K562 (cell line): ENCODE measurements at regions of chr3 and their contacts with region 1.

Region 1: DNA sequence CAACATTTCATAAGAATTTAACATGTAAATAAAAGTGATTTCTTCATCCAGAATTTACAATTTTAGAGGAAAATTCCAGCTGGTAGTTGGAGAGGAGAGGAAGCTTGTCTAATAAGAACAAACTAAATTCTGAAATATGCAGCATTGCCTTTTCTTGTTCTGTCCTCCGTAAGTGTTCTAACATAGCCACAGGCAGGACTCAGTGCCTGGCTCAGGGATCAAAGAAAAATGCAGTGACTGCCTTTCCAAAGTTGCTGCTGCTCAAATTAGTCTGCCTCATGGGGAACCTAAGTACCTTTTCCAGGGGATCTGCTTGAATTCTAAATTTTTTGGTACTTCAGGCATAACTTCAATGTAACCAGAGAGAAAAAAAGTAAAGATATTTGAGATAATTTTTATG is 713.0 kb upstream of the CADM2 start:
- DNase-seq: peak in 2 of 4 experiments; percentile 10 to 58
- ATAC-seq: peak; percentile 57
- H3K4me3 ChIP-seq: peak overlapping the region; percentile 33
- H3K27ac ChIP-seq: peak overlapping the region; percentile 87
- H3K4me1 ChIP-seq: no peaks in the 10 kb centered on the region; a peak in 1 of 5 replicates
- H3K27me3 ChIP-seq: no peaks in the 10 kb centered on the region
- CTCF ChIP-seq: no peak
- EP300 ChIP-seq: no peak
- POLR2A ChIP-seq: no peak
- RAD21 ChIP-seq: no peak

Region 2: GRCh38 chr3:84077479-84077878 is 168.3 kb before region 1 on chr3:
- CTCF ChIA-PET with region 1: no interaction called
- POLR2A ChIA-PET with region 1: no interaction called
- in situ Hi-C with region 1: no loop called
- intact Hi-C with region 1: no loop called
- DNase-seq: peak in 1 of 4 experiments; percentile 4
- ATAC-seq: no peak
- H3K4me3 ChIP-seq: no peak overlapping the region
- H3K27ac ChIP-seq: no peak overlapping the region
- H3K4me1 ChIP-seq: no peaks in the 10 kb centered on the region
- H3K27me3 ChIP-seq: no peaks in the 10 kb centered on the region
- CTCF ChIP-seq: peak in 1 of 3 experiments; percentile 9; a peak in 1 of 6 replicates
- EP300 ChIP-seq: no peak
- POLR2A ChIP-seq: no peak
- RAD21 ChIP-seq: peak in 1 of 2 experiments; percentile 27; a peak in 1 of 4 replicates

Region 3: DNA sequence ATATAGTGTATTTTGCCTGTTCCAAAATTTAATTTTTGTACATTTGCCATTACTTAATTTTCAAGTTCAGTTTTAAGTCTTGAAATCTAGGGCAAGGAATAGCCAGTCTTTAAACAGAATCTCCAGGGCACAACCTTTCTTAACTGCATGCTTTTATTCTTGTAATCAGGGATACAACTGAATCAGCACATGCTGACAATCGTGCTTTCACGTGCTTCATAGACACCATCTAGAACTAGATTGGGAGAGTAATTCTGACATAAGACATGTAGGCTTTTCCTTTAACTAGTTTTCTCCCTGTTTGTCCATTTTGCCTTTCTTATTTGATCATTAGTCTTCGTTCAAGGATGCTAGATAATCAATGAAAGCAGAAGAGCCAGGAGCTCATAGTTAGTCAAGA is 62.6 kb after region 1 on chr3:
- CTCF ChIA-PET with region 1: no interaction called
- POLR2A ChIA-PET with region 1: no interaction called
- in situ Hi-C with region 1: no loop called
- intact Hi-C with region 1: loop called (anchors 1 kb)
- DNase-seq: no peak
- ATAC-seq: peak; percentile 29
- H3K4me3 ChIP-seq: no peak overlapping the region; the same call in 1 of the 2 replicates
- H3K27ac ChIP-seq: peak overlapping the region; percentile 71
- H3K4me1 ChIP-seq: no peaks in the 10 kb centered on the region; a peak in 1 of 5 replicates
- H3K27me3 ChIP-seq: no peaks in the 10 kb centered on the region
- CTCF ChIP-seq: no peak
- EP300 ChIP-seq: no peak
- POLR2A ChIP-seq: no peak
- RAD21 ChIP-seq: no peak